CD4-positive, alpha-beta memory T cell (primary cell): ENCODE measurements at regions of chr19 and their contacts with region 1.

Region 1: DNA sequence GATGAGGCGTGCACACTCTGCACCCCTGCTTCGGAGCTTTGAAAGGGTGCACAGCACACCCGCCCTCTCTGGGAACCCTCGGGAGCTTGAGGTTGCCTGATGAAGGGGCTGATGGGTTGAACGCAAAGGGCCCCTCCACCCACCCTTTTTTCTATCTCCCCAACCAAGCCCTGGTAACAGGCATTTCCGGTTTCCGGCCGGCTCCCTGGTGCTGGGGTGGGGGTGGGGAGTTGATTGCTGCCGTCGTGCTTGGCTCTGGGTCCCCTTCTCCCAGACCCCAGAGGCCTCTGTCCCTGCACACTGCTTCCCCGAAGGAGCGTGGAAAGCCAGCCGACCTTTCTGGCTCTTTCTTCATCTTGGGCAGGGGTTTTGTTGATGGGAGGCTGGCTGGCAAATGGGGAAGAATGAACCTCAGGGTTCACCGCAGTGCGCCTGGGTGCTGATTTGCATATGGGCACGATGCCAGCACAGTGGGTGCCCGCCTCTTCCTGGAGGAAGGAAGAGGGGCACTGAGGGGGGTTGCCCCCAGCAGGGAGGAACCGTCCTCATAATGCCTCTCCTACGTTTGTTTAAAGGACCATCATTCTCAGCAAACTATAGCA is 29.1 kb downstream of the VAV1 start:
- DNase-seq: peak; percentile 82 to 86 (median 84)
- H3K4me3 ChIP-seq: peak overlapping the region; percentile 45 to 72
- H3K4me3 Mint-ChIP-seq: peak overlapping the region; percentile 83 to 96 (median 88)
- H3K27ac ChIP-seq: peak overlapping the region; percentile 78
- H3K27ac Mint-ChIP-seq: peak overlapping the region; percentile 93 to 99 (median 96)
- H3K4me1 ChIP-seq: peaks cover 54% of the 10 kb centered on the region
- H3K4me1 Mint-ChIP-seq: peaks cover 38 to 77% (median 55%) of the 10 kb centered on the region in 4 donors
- H3K27me3 ChIP-seq: no peaks in the 10 kb centered on the region
- H3K27me3 Mint-ChIP-seq: no peaks in the 10 kb centered on the region

Region 2: GRCh38 chr19:6761053-6761676 is 40.4 kb before region 1 on chr19:
- CTCF ChIA-PET with region 1: interaction called, 5 read pairs
- POLR2A ChIA-PET with region 1: interaction called, 227 read pairs
- intact Hi-C with region 1: no loop called
- DNase-seq: peak in 1 of 5 donors; percentile 21
- H3K4me3 ChIP-seq: no peak overlapping the region
- H3K4me3 Mint-ChIP-seq: no peak overlapping the region
- H3K27ac ChIP-seq: no peak overlapping the region
- H3K27ac Mint-ChIP-seq: peak overlapping the region in 1 of 7 donors; percentile 29
- H3K4me1 ChIP-seq: peaks cover 28% of the 10 kb centered on the region
- H3K4me1 Mint-ChIP-seq: peaks cover 15 to 22% (median 18%) of the 10 kb centered on the region in 4 donors
- H3K27me3 ChIP-seq: no peaks in the 10 kb centered on the region
- H3K27me3 Mint-ChIP-seq: no peaks in the 10 kb centered on the region

Region 3: DNA sequence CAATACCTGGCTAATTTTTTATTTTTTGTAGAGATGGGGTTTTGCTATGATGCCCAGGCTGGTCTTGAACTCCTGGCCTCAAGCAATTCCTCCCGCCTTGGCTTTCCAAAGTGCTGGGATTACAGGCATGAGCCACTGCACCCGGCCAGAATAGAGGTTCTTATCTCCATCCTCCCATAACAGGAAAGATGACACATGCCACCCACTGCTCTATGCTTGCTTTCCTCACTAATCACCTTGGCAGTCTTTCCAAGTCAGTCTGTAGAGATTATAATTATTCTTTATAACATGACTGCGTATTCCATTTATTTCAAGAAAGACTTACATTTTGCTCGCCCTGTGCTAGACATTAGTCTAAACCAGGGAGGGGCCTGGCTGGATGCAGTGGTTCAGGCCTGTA is 22.4 kb before region 1 on chr19:
- CTCF ChIA-PET with region 1: no interaction called
- POLR2A ChIA-PET with region 1: interaction called, 227 read pairs
- intact Hi-C with region 1: no loop called
- DNase-seq: no peak
- H3K4me3 ChIP-seq: no peak overlapping the region
- H3K4me3 Mint-ChIP-seq: no peak overlapping the region
- H3K27ac ChIP-seq: no peak overlapping the region
- H3K27ac Mint-ChIP-seq: peak overlapping the region in 3 of 7 donors; percentile 17 to 95 (median 31)
- H3K4me1 ChIP-seq: peaks cover 67% of the 10 kb centered on the region
- H3K4me1 Mint-ChIP-seq: peaks cover 40 to 69% (median 53%) of the 10 kb centered on the region in 4 donors
- H3K27me3 ChIP-seq: no peaks in the 10 kb centered on the region
- H3K27me3 Mint-ChIP-seq: no peaks in the 10 kb centered on the region

Region 4: GRCh38 chr19:6811906-6812305 is 10.3 kb after region 1 on chr19:
- CTCF ChIA-PET with region 1: interaction called, 7 read pairs
- POLR2A ChIA-PET with region 1: interaction called, 59 read pairs
- intact Hi-C with region 1: loop called (anchors 2 kb)
- DNase-seq: peak in 2 of 5 donors; percentile 22 to 29
- H3K4me3 ChIP-seq: no peak overlapping the region
- H3K4me3 Mint-ChIP-seq: peak overlapping the region in 3 of 8 donors; percentile 43 to 83 (median 61)
- H3K27ac ChIP-seq: no peak overlapping the region
- H3K27ac Mint-ChIP-seq: peak overlapping the region; percentile 44 to 94 (median 90)
- H3K4me1 ChIP-seq: peaks cover 51% of the 10 kb centered on the region
- H3K4me1 Mint-ChIP-seq: peaks cover 47 to 83% (median 62%) of the 10 kb centered on the region in 4 donors
- H3K27me3 ChIP-seq: no peaks in the 10 kb centered on the region
- H3K27me3 Mint-ChIP-seq: no peaks in the 10 kb centered on the region

Region 5: DNA sequence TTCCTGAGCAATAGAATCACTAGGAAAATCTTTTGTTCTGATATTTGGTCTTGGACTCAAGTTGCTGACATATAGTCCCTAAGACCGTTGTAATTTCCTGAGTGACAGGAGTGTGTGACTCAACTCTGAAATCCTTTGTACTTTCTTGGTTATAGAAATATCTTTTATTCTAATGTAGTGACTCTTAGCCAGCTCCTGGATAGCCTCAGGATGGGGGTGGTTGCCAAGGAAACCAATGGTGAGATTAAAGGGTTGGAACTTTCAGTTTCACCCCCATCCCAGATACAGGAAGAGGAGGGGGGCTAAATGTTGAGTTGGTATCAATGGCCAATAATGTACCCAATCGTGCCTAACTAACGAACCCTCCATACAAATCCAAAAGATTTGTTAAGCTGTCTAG is 177.8 kb after region 1 on chr19:
- CTCF ChIA-PET with region 1: no interaction called
- POLR2A ChIA-PET with region 1: no interaction called
- intact Hi-C with region 1: no loop called
- DNase-seq: no peak
- H3K4me3 ChIP-seq: no peak overlapping the region
- H3K4me3 Mint-ChIP-seq: no peak overlapping the region
- H3K27ac ChIP-seq: no peak overlapping the region
- H3K27ac Mint-ChIP-seq: no peak overlapping the region
- H3K4me1 ChIP-seq: no peaks in the 10 kb centered on the region
- H3K4me1 Mint-ChIP-seq: no peaks in the 10 kb centered on the region
- H3K27me3 ChIP-seq: no peaks in the 10 kb centered on the region
- H3K27me3 Mint-ChIP-seq: peaks cover 2 to 3% of the 10 kb centered on the region in 2 donors